Thyroid gland (tissue), 4 donors: ENCODE measurements at regions of chr2 and their contacts with region 1.

Region 1: DNA sequence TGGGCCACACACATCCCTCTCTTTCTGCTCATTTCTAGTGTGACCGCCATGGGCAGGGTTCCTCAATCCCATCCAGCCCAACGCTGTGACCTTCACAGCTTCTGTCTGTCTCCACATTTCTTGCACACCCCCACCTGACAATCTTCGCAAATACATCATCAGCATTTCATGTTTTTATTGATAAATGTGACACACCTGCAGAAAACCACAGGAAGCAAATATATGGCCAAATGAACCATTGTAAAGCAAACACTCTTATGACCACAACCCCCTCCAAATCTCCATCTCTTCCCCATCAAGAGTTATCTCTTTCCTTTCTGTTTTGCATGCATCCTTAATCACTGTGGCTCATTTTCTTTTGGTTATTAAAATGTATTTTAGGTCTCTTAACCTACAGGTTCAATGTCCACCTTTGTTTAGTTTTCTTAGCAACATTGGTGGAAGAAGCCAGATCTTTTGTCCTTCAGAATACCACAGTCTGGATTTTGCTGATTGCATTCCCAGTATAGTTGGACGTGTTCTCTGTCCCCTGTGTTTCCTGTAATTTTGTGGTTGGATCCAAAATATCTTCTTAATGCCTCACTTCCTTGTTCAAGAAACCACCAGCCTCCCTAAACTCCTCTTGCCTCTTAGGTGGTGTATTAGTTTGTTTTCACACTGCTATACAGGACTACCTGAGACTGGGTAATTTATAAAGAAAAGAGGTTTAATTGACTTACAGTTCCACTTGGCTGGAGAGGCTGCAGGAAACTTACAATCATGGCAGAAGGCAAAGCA is 9.8 kb upstream of the NCK2 start:
- DNase-seq: no peak
- H3K4me3 ChIP-seq: no peak overlapping the region
- H3K27ac ChIP-seq: no peak overlapping the region
- H3K4me1 ChIP-seq: no peaks in the 10 kb centered on the region
- H3K27me3 ChIP-seq: no peaks in the 10 kb centered on the region
- CTCF ChIP-seq: no peak
- POLR2A ChIP-seq: no peak

Region 2: DNA sequence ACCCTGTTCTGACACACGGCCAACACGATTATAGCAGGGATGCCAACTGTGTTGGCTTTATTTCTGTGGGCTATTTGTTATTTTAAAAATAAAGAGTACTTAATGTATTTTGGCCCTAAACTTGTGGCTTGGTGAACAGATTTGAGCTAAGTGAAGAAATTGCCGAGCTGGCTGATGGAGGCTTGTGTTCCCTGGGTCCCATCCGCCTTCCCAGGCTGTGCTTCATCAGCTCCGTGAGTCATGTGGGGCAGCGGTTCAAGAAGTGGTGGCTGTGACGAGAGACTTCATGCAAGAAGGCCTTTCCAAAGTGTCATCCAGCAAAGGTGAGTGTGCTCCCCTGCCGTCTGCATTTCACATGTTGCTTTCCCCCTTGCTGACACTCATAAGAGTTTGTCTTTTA is 63.8 kb before region 1 on chr2:
- intact Hi-C with region 1: loop called (anchors 10 kb)
- DNase-seq: peak; percentile 83 to 90
- H3K4me3 ChIP-seq: no peak overlapping the region
- H3K27ac ChIP-seq: peak overlapping the region in 1 of 3 donors; percentile 34
- H3K4me1 ChIP-seq: peaks cover 4 to 10% of the 10 kb centered on the region in 2 donors
- H3K27me3 ChIP-seq: no peaks in the 10 kb centered on the region
- CTCF ChIP-seq: no peak
- POLR2A ChIP-seq: no peak

Region 3: GRCh38 chr2:105827351-105828096 is 92.6 kb after region 1 on chr2:
- intact Hi-C with region 1: no loop called
- DNase-seq: no peak
- H3K4me3 ChIP-seq: no peak overlapping the region
- H3K27ac ChIP-seq: no peak overlapping the region
- H3K4me1 ChIP-seq: peaks cover 22 to 25% of the 10 kb centered on the region in 2 donors
- H3K27me3 ChIP-seq: no peaks in the 10 kb centered on the region
- CTCF ChIP-seq: no peak
- POLR2A ChIP-seq: no peak